ENCODE measurements at regions of chr3 and their contacts with region 1.

Region 1: DNA sequence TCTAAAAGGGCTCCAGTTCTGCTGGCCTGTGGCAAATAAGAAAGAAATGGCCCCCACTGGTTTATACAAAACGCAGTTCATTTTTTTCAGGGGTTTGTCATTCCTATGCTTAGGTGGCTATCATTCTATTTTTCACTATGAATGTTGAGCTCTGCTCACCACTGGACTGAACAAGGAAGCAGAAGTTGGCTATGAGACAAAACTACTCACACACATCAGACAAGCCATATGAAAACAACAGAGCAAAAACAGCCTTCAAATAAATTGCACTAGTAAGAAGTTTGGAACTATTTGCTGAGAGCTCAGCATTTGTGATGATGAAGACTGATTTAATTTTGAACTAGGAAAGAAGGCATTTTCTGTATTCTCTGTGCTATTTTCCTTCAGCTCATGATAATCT is 328.5 kb downstream of the MECOM start:
- DNase-seq: no peak
- H3K4me3 ChIP-seq: no peak overlapping the region
- H3K27ac ChIP-seq: no peak overlapping the region
- H3K4me1 ChIP-seq: no peaks in the 10 kb centered on the region
- H3K27me3 ChIP-seq: no peaks in the 10 kb centered on the region
- CTCF ChIP-seq: no peak

Region 2: DNA sequence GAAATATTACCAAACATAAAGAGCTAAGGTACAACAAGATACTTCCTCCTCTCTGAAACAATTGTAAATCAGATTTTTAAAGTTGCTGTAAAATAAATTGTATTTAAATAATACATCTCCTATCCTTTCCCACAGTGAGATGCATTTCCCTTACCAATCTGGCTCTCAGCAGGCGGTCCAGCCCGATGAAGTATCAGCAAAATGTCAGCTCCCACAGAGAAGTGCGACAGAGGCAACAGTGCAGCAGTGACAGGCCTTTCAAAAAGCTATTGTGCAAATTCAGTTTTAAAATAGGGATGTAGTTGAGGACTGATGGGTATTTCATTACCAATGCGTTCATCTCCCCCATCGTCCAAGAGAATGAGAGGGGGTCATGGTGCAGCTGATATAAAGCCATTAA is 506.0 kb before region 1 on chr3:
- intact Hi-C with region 1: no loop called
- DNase-seq: no peak
- H3K4me3 ChIP-seq: no peak overlapping the region
- H3K27ac ChIP-seq: no peak overlapping the region
- H3K4me1 ChIP-seq: no peaks in the 10 kb centered on the region
- H3K27me3 ChIP-seq: no peaks in the 10 kb centered on the region
- CTCF ChIP-seq: no peak

Region 3: GRCh38 chr3:169165196-169166158 is 169.5 kb before region 1 on chr3:
- intact Hi-C with region 1: loop called (anchors 10 kb)
- DNase-seq: no peak
- H3K4me3 ChIP-seq: no peak overlapping the region
- H3K27ac ChIP-seq: peak overlapping the region; percentile 1
- H3K4me1 ChIP-seq: no peaks in the 10 kb centered on the region
- H3K27me3 ChIP-seq: no peaks in the 10 kb centered on the region
- CTCF ChIP-seq: no peak

Region 4: DNA sequence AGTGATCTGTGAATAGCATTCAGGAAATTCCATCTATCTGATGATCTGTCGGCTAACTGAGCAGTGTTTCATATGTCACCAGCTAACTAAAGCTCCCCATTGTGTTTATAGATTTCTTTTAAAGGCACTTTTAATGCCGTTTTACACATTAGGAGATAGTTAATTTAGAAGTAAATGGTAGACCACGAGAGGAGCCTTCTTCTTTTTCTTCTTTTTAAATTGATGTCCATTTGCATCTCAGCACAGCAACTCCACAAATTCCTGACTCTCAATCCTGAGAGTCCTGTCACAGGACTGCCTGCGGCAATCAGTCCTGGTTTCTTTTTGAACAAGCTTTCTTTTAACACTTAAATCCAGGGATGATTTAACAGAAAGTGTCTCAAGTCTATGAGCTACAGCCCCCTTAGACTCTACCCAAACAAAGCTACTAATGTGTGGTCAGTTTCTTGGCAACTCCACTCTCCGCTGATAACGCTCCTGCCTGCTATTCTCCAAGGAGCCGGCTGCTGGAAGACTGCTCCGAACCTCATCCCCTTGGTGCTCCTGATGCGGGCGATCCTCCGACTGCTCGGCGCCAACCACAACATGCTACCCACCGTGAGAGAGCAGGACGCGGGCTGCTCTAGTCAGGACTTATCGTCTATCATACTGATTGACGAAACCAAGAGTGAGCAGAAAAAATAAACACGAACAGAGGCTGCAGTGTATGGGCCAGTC is 92.8 kb before region 1 on chr3:
- intact Hi-C with region 1: no loop called
- DNase-seq: no peak
- H3K4me3 ChIP-seq: no peak overlapping the region
- H3K27ac ChIP-seq: no peak overlapping the region
- H3K4me1 ChIP-seq: no peaks in the 10 kb centered on the region
- H3K27me3 ChIP-seq: no peaks in the 10 kb centered on the region
- CTCF ChIP-seq: no peak